Naive thymus-derived CD4-positive, alpha-beta T cell (primary cell): ENCODE measurements at regions of chr20 and their contacts with region 1.

Region 1: DNA sequence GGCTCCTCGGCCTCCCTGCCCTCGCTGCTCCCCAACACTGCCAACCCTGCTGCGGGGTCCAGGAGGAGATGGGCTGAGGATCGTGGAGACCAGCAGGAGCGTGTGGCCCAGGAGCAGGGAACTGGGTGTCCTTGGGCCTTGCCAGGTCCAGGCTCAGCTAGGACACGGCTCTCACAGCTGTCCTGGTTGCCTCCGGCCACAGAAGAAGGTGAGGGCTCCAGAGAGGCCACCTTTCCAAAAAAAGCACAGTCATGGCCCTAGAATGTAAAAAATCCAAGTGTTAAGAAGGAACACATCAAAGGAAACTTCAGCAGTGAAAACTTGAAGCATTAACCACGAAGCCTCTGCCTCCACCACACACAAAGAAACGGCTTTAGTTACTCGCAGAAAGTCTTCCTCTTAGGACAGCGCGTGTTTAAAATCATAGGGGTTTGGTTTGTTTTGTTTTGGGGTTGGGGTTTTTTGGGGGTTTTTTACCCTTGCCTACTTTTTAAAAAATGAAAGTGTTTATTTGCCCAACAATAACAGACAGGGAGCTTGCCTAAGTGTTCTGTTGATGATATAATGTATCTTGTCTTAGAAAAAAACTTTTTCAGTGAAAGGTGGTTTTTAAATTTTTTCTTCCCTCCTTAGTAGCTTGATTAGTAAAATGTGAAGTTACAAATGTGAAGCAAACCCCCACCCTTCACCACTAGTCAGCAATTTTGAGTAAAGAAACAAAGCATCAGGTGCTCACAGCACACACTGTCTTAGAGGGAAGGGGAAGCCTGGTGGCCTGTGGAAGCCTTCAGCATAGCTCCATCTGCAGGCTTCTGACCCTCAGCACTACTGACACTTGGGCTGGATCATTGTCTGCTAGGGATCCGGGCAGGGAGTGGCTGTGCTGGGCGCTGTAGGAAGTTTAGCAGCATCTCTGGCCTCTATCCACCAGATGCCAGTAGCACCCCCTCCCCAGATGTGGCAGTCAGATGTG is 60.0 kb downstream of the PTPN1 start:
- DNase-seq: peak in 7 of 9 donors; percentile 18 to 49 (median 45)
- ATAC-seq: peak; percentile 79
- H3K4me3 ChIP-seq: no peak overlapping the region
- H3K4me3 Mint-ChIP-seq: peak overlapping the region; percentile 5 to 73 (median 45)
- H3K27ac ChIP-seq: peak overlapping the region; percentile 36
- H3K27ac Mint-ChIP-seq: peak overlapping the region; percentile 46 to 91 (median 83)
- H3K4me1 ChIP-seq: peaks cover 7 to 19% of the 10 kb centered on the region in 2 donors
- H3K4me1 Mint-ChIP-seq: peaks cover 39 to 75% (median 70%) of the 10 kb centered on the region in 7 donors
- H3K27me3 ChIP-seq: no peaks in the 10 kb centered on the region
- H3K27me3 Mint-ChIP-seq: no peaks in the 10 kb centered on the region

Region 2: DNA sequence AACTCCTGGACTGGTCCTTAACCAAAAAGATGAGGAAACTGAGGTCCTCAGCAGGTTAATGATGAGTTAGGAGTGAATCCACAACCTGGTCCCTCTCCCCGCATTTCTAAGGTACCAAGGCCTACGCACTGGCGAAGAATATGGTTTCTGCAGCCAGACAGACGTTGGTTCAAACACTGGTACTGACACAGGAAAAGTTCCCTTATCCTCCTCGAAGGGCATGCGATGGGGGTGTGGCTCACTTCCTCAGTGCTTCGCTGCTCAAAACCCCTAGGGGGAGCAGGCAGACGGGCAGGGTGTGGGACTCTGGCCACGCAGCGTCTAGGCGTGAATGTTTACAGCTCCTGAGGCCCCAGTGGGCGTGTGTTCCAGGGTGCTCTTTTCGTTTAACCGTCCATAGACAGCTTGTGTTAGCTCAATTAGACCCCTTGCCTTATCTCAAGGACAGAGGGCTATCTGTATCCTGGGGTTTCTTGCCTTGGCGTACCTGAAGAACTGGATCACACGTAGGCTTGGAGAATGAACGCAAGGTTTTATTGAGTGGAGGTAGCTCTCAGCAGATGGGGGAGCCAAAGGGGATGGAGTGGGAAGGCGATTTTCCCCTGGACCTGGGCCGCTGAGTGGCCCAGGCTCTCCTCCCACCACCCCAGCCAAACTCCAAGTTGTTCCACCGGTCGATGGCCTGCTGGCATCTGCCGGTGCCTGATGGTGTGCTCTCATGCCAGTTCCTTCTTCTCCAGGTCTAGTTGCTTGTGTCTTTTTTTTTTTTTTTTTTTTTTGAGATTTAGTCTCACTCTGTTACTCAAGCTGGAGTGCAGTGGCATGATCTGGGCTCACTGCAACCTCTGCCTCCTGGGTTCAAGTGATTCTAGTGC is 91.8 kb before region 1 on chr20:
- CTCF ChIA-PET with region 1: interaction called, 41 read pairs
- POLR2A ChIA-PET with region 1: interaction called, 3 read pairs
- intact Hi-C with region 1: loop called (anchors 1 kb)
- DNase-seq: peak; percentile 50 to 81 (median 73)
- ATAC-seq: peak; percentile 100
- H3K4me3 ChIP-seq: no peak overlapping the region
- H3K4me3 Mint-ChIP-seq: peak overlapping the region in 1 of 10 donors; percentile 19
- H3K27ac ChIP-seq: no peak overlapping the region
- H3K27ac Mint-ChIP-seq: peak overlapping the region in 1 of 9 donors; percentile 9
- H3K4me1 ChIP-seq: peaks cover 8 to 14% of the 10 kb centered on the region in 2 donors
- H3K4me1 Mint-ChIP-seq: peaks cover 8 to 41% (median 19%) of the 10 kb centered on the region in 7 donors
- H3K27me3 ChIP-seq: no peaks in the 10 kb centered on the region
- H3K27me3 Mint-ChIP-seq: no peaks in the 10 kb centered on the region

Region 3: DNA sequence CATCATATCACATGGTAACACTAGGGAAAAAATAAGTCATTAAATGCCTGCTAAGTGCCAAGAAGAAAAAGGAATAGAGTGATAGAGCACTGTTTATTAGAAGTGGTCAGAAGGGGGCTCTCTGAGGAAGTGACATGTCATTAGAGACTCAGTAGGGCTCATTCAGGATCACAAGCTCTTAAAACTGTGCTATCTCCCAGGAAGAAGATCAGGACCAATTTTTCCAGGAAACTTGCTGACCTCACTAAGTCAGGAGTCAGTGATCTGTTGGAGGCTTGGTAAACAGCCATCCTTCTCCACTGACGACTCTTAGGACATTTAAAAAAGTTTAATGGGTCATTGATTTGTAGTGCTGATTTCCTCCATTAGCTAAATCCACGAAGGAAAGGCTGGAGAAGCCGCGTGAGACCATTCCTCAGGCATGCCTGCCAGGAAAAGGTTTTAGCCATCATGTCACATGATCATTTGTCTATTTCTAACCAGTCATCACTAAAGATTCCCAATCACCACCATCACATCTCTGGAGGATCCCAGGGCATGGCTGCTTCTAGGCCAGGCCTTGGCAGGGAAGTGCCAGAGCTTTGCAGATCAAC is 65.8 kb before region 1 on chr20:
- CTCF ChIA-PET with region 1: interaction called, 67 read pairs
- POLR2A ChIA-PET with region 1: interaction called, 45 read pairs
- intact Hi-C with region 1: loop called in 1 of 2 experiments (anchors 1 kb)
- DNase-seq: no peak
- ATAC-seq: peak; percentile 39
- H3K4me3 ChIP-seq: no peak overlapping the region
- H3K4me3 Mint-ChIP-seq: no peak overlapping the region
- H3K27ac ChIP-seq: no peak overlapping the region
- H3K27ac Mint-ChIP-seq: peak overlapping the region in 1 of 9 donors; percentile 60
- H3K4me1 ChIP-seq: no peaks in the 10 kb centered on the region
- H3K4me1 Mint-ChIP-seq: peaks cover 0 to 23% (median 8%) of the 10 kb centered on the region in 7 donors
- H3K27me3 ChIP-seq: no peaks in the 10 kb centered on the region
- H3K27me3 Mint-ChIP-seq: no peaks in the 10 kb centered on the region

Region 4: DNA sequence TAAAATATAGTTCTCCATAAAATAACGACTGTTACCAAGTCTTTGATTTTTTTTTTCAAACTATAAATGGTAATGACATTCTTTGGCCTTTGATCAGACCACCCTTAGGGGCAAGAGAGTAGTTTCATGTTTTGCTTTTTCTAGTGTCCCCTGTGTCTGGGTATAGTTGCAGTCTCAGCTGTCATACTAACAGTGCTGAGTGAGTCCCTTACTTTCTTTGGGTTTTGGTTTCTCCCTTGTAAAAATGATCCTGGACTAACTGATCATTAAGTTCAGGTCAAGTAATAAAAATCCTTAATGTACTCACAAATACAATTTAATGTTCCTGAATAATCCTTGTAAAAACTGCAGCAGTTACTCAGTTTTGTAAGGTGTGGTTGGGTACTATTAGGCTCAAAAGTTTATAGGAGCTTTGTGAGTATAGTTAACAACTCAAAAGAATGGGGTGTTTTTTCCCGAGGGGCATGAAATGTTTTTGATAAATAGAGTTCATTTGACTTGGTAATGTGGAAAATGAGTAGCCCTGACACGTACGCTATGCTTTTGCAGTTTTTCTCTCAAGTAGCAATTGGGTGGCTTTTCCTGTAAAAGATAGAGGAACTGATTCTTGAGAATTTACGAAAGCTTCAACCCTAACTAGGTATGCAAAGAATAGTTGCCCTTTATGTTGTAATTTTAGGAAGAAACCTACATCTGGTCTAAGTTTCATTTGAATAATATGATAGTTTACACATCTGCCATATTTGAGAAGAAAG is 53.8 kb before region 1 on chr20:
- CTCF ChIA-PET with region 1: interaction called, 13 read pairs
- POLR2A ChIA-PET with region 1: interaction called, 45 read pairs
- intact Hi-C with region 1: loop called (anchors 1 to 2 kb)
- DNase-seq: no peak
- ATAC-seq: peak; percentile 19
- H3K4me3 ChIP-seq: peak overlapping the region; percentile 4
- H3K4me3 Mint-ChIP-seq: peak overlapping the region; percentile 8 to 99 (median 76)
- H3K27ac ChIP-seq: peak overlapping the region; percentile 62
- H3K27ac Mint-ChIP-seq: peak overlapping the region; percentile 44 to 98 (median 88)
- H3K4me1 ChIP-seq: peaks cover 77 to 85% of the 10 kb centered on the region in 2 donors
- H3K4me1 Mint-ChIP-seq: peaks cover 77 to 100% (median 99%) of the 10 kb centered on the region in 7 donors
- H3K27me3 ChIP-seq: no peaks in the 10 kb centered on the region
- H3K27me3 Mint-ChIP-seq: no peaks in the 10 kb centered on the region